T-cell (primary cell): ENCODE measurements at regions of chr10 and their contacts with region 1.

Region 1: GRCh38 chr10:49407552-49408137 is 11.8 kb upstream of the DRGX start:
- DNase-seq: peak; percentile 17 to 78 (median 60)
- ATAC-seq: peak; percentile 52 to 78 (median 64)
- H3K4me3 ChIP-seq: no peak overlapping the region
- H3K4me3 Mint-ChIP-seq: no peak overlapping the region
- H3K27ac ChIP-seq: no peak overlapping the region
- H3K27ac Mint-ChIP-seq: no peak overlapping the region
- H3K4me1 ChIP-seq: no peaks in the 10 kb centered on the region
- H3K4me1 Mint-ChIP-seq: peaks cover 0 to 3% (median 2%) of the 10 kb centered on the region in 3 donors
- H3K27me3 ChIP-seq: peaks cover 0 to 75% of the 10 kb centered on the region in 2 experiments
- H3K27me3 Mint-ChIP-seq: peaks cover 56 to 69% of the 10 kb centered on the region in 2 donors

Region 2: DNA sequence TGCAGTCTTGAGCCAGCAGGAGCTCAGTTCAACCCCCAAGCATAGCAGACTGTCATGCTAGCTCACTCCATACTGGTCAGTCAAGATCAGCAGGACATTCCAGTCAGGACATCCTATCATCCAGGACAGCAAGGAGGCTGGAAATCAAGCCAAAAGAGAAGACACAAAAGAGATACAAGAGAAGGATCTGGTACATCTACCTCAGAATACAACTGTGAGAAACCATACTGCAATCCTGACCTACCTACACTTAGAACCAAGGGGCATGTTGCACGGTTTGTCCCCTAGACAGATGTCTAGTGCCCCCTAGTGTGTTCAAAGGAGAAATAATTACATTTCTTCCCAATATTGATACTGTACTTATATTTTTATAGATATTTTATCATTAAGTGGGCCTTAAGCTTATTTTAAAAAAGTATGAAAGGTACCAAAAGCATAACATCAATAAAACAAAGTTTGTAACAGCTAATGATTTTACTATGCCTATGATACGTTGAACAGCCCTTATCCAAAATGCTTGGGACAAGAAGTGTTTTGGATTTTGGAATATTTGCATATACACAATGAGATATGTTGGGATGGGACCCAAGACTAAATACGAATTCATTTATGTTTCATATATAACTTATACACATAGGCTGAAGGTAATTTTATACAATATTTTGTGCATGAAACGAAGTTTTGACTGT is 104.6 kb after region 1 on chr10:
- CTCF ChIA-PET with region 1: interaction called, 46 to 80 read pairs
- POLR2A ChIA-PET with region 1: no interaction called
- DNase-seq: peak in 5 of 35 experiments; percentile 6 to 55 (median 15)
- ATAC-seq: peak in 2 of 4 experiments; percentile 43 to 48
- H3K4me3 ChIP-seq: no peak overlapping the region
- H3K4me3 Mint-ChIP-seq: no peak overlapping the region
- H3K27ac ChIP-seq: no peak overlapping the region
- H3K27ac Mint-ChIP-seq: no peak overlapping the region
- H3K4me1 ChIP-seq: peaks cover 14 to 19% of the 10 kb centered on the region in 2 experiments
- H3K4me1 Mint-ChIP-seq: peaks cover 21 to 29% (median 28%) of the 10 kb centered on the region in 3 donors
- H3K27me3 ChIP-seq: peaks cover 0 to 2% of the 10 kb centered on the region in 2 experiments
- H3K27me3 Mint-ChIP-seq: peaks cover 1 to 10% of the 10 kb centered on the region in 2 donors

Region 3: GRCh38 chr10:49518982-49519578 is 111.4 kb after region 1 on chr10:
- CTCF ChIA-PET with region 1: interaction called, 10 to 80 read pairs
- POLR2A ChIA-PET with region 1: no interaction called
- DNase-seq: peak in 13 of 35 experiments; percentile 8 to 67 (median 17)
- ATAC-seq: peak; percentile 57 to 68 (median 61)
- H3K4me3 ChIP-seq: no peak overlapping the region
- H3K4me3 Mint-ChIP-seq: no peak overlapping the region
- H3K27ac ChIP-seq: no peak overlapping the region
- H3K27ac Mint-ChIP-seq: no peak overlapping the region
- H3K4me1 ChIP-seq: no peaks in the 10 kb centered on the region
- H3K4me1 Mint-ChIP-seq: peaks cover 5 to 16% (median 11%) of the 10 kb centered on the region in 3 donors
- H3K27me3 ChIP-seq: no peaks in the 10 kb centered on the region
- H3K27me3 Mint-ChIP-seq: peaks cover 0 to 2% of the 10 kb centered on the region in 2 donors

Region 4: DNA sequence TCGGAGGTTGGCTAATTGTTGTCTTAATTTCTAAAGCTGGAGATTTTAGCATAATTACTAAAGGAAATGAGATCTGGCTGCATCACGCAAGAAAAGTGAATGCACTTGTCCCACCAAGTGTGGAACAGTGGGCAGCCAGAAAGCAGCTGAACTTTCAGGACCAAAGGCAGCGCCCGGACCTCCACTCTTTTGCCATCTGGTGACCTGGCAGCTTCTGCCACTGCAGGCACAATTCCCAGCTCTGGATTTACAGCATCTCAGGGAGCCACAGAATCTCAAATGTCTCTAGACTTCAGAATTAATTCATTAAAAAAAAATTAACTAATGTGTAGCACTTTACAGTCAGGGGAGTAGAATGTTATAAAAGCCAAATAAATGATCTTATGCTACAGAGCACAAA is 369.2 kb after region 1 on chr10:
- CTCF ChIA-PET with region 1: no interaction called
- POLR2A ChIA-PET with region 1: no interaction called
- DNase-seq: no peak
- ATAC-seq: no peak
- H3K4me3 ChIP-seq: no peak overlapping the region
- H3K4me3 Mint-ChIP-seq: no peak overlapping the region
- H3K27ac ChIP-seq: no peak overlapping the region
- H3K27ac Mint-ChIP-seq: no peak overlapping the region
- H3K4me1 ChIP-seq: no peaks in the 10 kb centered on the region
- H3K4me1 Mint-ChIP-seq: no peaks in the 10 kb centered on the region
- H3K27me3 ChIP-seq: peaks cover 0 to 9% of the 10 kb centered on the region in 2 experiments
- H3K27me3 Mint-ChIP-seq: peaks cover 16 to 18% of the 10 kb centered on the region in 2 donors